ENCODE measurements at regions of chr10 and their contacts with region 1.

Region 1: GRCh38 chr10:23314835-23315239 is 29.8 kb downstream of the C10orf67 start:
- DNase-seq: peak; percentile 48
- CTCF ChIP-seq: peak; percentile 51

Region 2: DNA sequence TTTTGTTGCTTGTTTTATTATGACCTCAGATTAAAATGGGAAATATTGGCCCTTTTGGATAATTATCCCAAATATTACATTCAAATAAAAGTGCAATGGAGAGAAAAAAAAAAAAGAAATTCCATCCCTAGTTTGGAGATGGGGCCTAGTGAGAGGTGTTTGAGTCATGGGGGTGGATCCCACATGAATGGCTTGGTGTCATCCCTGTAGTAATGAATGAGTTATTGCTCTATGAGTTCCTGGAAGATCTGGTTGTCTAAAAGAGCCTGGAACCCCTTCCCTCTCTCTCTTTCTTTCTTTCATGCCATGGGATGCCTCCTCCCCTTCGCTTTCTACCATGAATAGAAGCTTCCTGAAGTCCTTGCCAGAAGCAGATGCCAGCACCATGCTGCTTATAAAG is 175.2 kb before region 1 on chr10:
- CTCF ChIA-PET with region 1: no interaction called
- POLR2A ChIA-PET with region 1: no interaction called
- DNase-seq: no peak
- CTCF ChIP-seq: no peak

Region 3: GRCh38 chr10:23293145-23293724 is 21.6 kb before region 1 on chr10:
- CTCF ChIA-PET with region 1: interaction called, 10 read pairs
- POLR2A ChIA-PET with region 1: no interaction called
- DNase-seq: peak; percentile 45
- CTCF ChIP-seq: peak; percentile 64

Region 4: GRCh38 chr10:23325132-23325531 is 10.3 kb after region 1 on chr10:
- CTCF ChIA-PET with region 1: interaction called, 35 read pairs
- POLR2A ChIA-PET with region 1: no interaction called
- DNase-seq: no peak
- CTCF ChIP-seq: peak; percentile 14

Region 5: DNA sequence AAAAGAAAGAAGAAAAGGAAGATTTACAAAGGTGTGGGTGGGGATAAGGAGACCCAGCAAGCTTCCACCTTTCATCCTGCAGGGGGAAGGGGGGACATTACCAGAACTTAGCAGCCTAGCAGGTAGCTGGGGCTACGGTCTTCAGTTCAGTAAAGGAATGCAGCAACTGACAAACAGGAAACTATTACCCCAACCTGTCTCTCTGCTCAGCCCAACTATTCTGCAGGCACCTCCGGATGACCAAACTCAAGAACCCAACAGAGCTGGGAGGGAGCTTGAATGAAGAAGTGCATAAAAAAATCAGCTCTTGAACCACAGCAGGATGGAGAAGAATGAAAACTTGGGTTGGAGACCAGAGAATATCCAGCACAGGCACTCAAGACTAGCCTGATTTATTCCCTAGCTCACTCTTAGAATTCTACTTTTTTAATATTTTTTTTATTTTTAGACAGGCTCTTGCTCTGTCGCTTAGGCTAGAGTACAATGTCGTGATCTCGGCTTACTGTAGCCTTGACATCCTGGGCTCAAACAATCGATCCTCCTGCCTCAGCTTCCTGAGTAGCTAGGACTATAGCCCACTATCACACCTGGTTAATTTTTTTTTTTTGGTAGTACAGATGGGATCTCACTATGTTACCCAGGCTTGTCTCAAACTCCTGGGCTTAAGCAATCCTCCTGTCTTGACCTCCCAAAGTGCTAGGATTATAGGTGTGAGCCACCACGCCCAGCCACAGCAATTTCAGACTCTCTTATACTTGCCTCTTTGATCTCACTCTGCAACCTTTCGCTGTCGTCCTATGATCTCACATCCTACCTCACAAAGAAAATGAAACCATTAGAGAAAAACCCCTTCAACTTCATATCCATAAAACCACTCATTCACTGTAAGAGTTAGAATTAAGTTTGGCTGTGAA is 48.3 kb after region 1 on chr10:
- CTCF ChIA-PET with region 1: no interaction called
- POLR2A ChIA-PET with region 1: no interaction called
- DNase-seq: peak; percentile 40
- CTCF ChIP-seq: no peak

Region 6: DNA sequence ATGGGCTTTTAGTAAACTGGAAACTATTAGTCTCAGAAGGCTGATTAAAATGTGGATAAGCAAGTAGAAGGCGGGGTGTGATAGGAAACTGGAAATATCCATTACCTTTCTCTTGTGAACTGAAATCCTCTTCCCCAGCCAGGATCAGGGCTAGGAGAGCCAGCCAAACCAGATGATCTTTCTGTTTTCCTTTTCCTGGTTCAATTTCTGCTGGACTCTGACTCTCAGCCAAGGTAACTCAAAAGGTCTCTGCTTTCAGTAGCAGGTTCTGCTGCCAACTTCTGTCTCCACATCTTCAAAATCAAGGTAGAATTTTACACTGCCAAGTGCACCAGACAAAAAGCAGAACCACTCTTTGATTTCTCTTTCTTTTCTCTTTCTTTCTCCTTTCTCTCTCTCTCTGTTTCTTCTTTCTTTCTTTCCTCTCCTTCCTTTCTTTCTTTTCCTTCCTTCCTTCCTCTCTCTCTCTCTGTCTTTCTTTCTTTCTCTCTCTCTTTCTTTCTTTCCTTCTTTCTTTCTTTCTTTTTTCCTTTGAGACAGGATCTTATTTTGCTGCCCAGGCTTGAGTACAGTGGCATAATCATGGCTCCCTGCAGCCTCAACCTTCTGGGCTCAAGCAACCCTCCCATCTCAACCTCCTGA is 154.9 kb after region 1 on chr10:
- CTCF ChIA-PET with region 1: no interaction called
- POLR2A ChIA-PET with region 1: no interaction called
- DNase-seq: no peak
- CTCF ChIP-seq: no peak

Region 7: DNA sequence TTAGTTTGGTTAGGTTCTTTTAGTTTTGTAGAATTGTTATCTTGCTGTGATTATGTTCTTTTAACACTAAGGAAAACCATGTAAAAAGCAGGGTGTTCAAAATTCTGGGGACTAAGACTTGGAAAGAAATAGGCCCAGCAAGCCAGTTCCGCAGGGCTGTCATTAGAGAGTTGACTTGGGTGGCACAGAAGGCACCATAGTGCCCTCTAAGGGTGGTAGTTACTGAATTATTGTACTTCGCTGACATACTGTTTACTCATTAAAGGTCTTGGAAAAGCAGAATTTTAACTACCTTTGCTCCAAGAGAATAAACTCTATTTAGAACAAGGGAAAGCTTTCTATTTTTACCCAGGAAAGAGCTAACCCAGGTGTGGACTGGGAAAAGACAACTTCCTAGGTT is 210.6 kb after region 1 on chr10:
- CTCF ChIA-PET with region 1: interaction called, 126 read pairs
- POLR2A ChIA-PET with region 1: no interaction called
- DNase-seq: peak; percentile 12
- CTCF ChIP-seq: peak; percentile 25

Region 8: GRCh38 chr10:23692736-23693135 is 377.9 kb after region 1 on chr10:
- CTCF ChIA-PET with region 1: interaction called, 10 read pairs
- POLR2A ChIA-PET with region 1: no interaction called
- DNase-seq: no peak
- CTCF ChIP-seq: no peak

Region 9: GRCh38 chr10:23702977-23703414 is 388.2 kb after region 1 on chr10:
- CTCF ChIA-PET with region 1: interaction called, 21 read pairs
- POLR2A ChIA-PET with region 1: no interaction called
- DNase-seq: peak; percentile 45
- CTCF ChIP-seq: peak; percentile 76

Measured in GM10248 (cell line).